ENCODE measurements at regions of chr6 and their contacts with region 1.

Region 1: DNA sequence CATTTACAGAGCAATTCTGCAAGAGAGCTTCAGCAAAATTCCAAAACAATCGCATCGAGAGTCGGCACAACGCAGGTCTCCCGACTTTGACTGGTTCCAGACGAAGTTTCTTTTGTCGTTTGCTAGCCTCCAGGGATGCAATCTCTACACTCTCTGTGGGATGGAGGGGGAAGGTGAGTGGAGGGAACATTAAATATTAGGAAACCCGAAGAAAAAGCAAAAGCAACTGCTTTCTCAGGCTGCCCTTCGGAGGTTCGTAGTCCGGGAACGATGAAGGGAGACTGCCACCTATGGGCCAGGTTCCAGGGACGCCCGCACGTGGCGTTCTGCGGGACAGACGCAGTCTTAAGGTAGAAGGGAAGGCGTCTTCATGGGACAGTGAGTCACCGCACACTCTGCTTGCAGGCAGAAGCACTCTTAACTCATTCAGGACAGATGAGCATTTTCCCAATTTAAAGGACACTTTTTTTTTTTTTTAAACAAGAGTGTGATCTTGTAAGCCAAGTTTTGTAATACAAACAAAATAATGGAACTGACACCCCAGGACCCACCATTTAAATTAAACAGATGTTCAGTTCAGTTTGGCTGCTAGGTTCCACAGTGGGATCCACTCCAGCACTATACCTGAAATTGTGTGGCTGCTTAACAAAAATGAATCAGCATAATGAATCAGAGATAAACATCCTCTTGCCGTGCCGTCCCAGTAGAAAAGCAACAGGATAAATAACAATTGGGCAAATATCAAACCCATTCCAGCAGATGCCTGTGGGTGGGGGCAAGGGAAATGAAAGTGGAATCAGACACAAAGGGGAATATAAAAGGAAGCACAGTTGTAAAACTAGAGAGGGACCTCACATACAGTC is 65.8 kb upstream of the ARMC2 start:
- DNase-seq: peak; percentile 89 to 91
- H3K4me3 ChIP-seq: peak overlapping the region; percentile 43
- H3K27ac ChIP-seq: peak overlapping the region; percentile 77
- H3K4me1 ChIP-seq: peaks cover 45% of the 10 kb centered on the region
- H3K27me3 ChIP-seq: no peaks in the 10 kb centered on the region
- CTCF ChIP-seq: peak; percentile 91

Region 2: GRCh38 chr6:108541838-108542759 is 240.3 kb before region 1 on chr6:
- CTCF ChIA-PET with region 1: no interaction called
- POLR2A ChIA-PET with region 1: no interaction called
- intact Hi-C with region 1: loop called (anchors 1 kb)
- DNase-seq: peak; percentile 68 to 71
- H3K4me3 ChIP-seq: no peak overlapping the region
- H3K27ac ChIP-seq: no peak overlapping the region
- H3K4me1 ChIP-seq: peaks cover 3% of the 10 kb centered on the region; the same call in 1 of the 2 replicates
- H3K27me3 ChIP-seq: no peaks in the 10 kb centered on the region
- CTCF ChIP-seq: peak; percentile 98

Region 3: DNA sequence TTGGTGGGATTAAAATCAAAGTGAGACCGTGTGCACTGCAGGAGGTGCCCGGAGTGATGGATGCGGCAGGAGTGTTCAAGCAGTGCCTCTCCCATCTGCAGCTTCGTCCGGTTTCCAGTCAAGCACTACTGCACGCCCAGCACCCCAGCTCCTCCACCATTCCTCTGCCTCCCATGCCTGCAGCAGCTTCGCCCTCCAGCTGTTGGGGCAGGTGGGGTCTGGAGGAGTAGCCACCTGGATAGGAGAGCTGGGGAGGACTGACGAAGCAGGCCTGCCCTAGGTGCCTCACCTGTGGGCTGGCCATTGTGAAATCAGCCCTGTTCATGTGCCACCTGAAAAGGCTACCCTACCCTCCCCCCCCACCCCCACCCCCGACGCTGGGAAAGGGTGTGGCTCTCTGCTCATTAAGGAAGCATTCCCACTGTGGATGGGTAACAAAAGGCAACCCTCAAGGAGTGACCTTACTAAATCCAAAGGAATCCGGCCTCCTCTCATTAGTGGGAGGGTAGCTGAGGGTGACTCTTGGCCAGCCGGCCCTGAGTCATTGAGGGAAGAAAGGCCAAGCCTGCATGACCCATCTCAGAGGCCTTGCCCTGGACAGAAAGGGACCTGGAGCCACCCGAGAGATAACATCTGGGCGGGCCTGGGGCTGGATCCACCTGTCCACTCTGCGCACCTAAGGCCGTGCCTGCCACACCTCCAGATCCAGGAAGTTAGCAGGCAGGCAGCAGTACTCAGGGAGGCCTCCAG is 50.1 kb before region 1 on chr6:
- CTCF ChIA-PET with region 1: no interaction called
- POLR2A ChIA-PET with region 1: interaction called, 4 read pairs
- intact Hi-C with region 1: loop called (anchors 1 kb)
- DNase-seq: peak; percentile 96 to 100
- H3K4me3 ChIP-seq: peak overlapping the region; percentile 46; the same call in 1 of the 2 replicates
- H3K27ac ChIP-seq: peak overlapping the region; percentile 99
- H3K4me1 ChIP-seq: peaks cover 71% of the 10 kb centered on the region
- H3K27me3 ChIP-seq: no peaks in the 10 kb centered on the region
- CTCF ChIP-seq: no peak

Region 4: GRCh38 chr6:108737594-108738546 is 44.5 kb before region 1 on chr6:
- CTCF ChIA-PET with region 1: no interaction called
- POLR2A ChIA-PET with region 1: no interaction called
- intact Hi-C with region 1: loop called (anchors 1 kb)
- DNase-seq: peak; percentile 84 to 99
- H3K4me3 ChIP-seq: peak overlapping the region; percentile 59
- H3K27ac ChIP-seq: peak overlapping the region; percentile 99
- H3K4me1 ChIP-seq: peaks cover 93% of the 10 kb centered on the region
- H3K27me3 ChIP-seq: no peaks in the 10 kb centered on the region
- CTCF ChIP-seq: no peak

Region 5: GRCh38 chr6:108835218-108835850 is 52.9 kb after region 1 on chr6:
- CTCF ChIA-PET with region 1: no interaction called
- POLR2A ChIA-PET with region 1: no interaction called
- intact Hi-C with region 1: loop called (anchors 1 kb)
- DNase-seq: peak; percentile 61 to 78
- H3K4me3 ChIP-seq: no peak overlapping the region
- H3K27ac ChIP-seq: no peak overlapping the region
- H3K4me1 ChIP-seq: no peaks in the 10 kb centered on the region
- H3K27me3 ChIP-seq: no peaks in the 10 kb centered on the region
- CTCF ChIP-seq: peak; percentile 95

Region 6: DNA sequence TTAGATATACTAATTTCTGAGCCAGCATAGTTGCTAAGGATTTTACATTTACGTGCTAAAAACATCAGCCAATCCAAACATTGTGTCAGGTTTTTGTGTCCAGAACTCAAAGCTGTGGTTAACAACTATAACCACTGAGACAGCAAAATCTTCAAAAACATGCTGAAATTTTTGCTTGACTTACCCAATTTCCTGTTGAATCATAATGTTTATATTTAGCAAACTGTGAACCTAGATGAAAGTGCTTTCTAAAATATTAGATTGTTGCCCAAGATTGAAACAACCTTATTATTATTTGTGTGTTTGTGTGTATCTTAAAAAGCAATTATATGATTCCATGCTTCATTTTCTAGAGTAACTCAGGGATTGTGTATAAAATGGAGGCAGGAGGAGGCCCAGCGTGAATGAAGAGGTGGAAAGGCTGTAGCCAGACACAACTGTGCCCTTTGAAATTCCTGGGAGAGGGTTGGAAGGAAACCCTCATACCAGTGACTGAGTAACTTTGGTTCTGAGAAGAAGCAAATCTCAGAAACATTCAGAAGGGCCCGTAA is 113.8 kb after region 1 on chr6:
- CTCF ChIA-PET with region 1: interaction called, 5 read pairs
- POLR2A ChIA-PET with region 1: no interaction called
- intact Hi-C with region 1: loop called (anchors 5 kb)
- DNase-seq: peak in 1 of 2 experiments; percentile 50
- H3K4me3 ChIP-seq: no peak overlapping the region
- H3K27ac ChIP-seq: peak overlapping the region; percentile 57
- H3K4me1 ChIP-seq: peaks cover 14% of the 10 kb centered on the region
- H3K27me3 ChIP-seq: no peaks in the 10 kb centered on the region
- CTCF ChIP-seq: no peak